ENCODE measurements at regions of chr1 and their contacts with region 1.

Region 1: DNA sequence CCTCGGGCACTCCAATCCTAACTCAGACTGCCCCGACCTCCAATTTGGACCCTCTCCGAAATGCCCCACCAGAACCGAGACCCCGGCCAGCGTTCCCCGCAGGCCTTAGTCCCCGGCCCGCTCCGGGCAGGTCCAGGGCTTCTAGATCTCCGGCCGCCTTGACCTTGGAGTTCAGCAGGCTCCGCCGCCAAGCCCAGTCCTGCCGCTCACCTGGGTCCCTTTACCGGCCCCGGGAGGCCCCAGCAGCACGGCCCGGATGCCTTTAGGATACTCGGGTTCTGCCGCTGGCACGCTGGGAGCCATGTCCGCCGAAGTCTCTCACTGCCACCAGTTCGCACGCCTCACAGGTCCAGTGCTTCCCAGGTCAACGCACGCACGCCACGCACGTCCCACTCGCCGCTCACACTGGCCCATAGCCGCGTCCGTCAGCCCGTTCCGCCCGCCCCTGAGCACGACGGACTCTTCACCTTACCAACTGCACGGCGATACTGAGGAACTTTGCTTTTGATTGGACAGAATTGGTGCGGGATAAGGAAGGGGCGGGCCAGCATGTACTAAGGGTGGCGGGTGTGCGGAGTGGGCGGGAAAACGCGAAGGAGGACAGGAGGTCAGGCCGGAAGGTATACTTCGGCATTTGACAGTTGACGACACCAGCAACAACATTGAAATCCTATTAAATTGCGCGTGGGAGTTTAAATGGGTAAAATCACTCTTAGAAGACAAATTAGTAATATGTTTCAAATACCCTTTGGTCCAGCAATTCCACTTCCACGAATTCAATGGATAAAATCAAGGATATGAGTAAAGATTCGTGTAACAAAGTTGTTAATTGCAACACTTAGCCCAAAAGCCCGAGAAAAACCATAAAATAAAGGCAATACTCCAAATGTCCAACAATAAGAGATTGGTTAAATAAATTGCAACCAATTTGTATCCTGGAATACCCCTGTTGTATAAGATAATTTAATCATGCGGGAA is at the start of gene AK2:
- DNase-seq: peak; percentile 97
- ATAC-seq: peak; percentile 100
- H3K4me3 ChIP-seq: peak within 1 kb of the TSS; percentile 77 to 86 (median 85)
- H3K27ac ChIP-seq: peak within 1 kb of the TSS; percentile 76
- H3K4me1 ChIP-seq: peaks cover 75% of the 10 kb centered on the region
- H3K27me3 ChIP-seq: no peaks in the 10 kb centered on the region
- CTCF ChIP-seq: no peak
- EP300 ChIP-seq: no peak
- POLR2A ChIP-seq: peak; percentile 63 to 80; a peak in 3 of 4 replicates
- RAD21 ChIP-seq: no peak
- total RNA-seq, gene AK2: 188 and 241 TPM in 2 replicates

Region 2: DNA sequence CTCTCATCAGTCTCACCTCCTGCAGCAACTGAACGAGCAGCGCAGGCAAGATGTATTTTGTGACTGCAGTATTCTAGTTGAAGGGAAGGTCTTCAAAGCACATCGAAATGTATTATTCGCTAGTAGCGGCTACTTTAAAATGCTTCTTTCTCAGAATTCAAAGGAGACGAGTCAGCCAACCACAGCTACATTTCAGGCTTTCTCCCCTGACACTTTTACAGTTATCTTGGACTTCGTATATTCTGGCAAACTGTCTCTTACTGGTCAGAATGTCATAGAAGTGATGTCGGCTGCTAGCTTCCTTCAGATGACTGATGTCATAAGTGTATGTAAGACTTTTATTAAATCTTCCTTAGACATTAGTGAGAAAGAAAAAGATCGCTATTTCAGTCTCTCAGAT is 443.9 kb before region 1 on chr1:
- CTCF ChIA-PET with region 1: no interaction called
- POLR2A ChIA-PET with region 1: no interaction called
- in situ Hi-C with region 1: no loop called
- intact Hi-C with region 1: no loop called
- DNase-seq: no peak
- ATAC-seq: no peak
- H3K4me3 ChIP-seq: no peak overlapping the region
- H3K27ac ChIP-seq: no peak overlapping the region
- H3K4me1 ChIP-seq: no peaks in the 10 kb centered on the region
- H3K27me3 ChIP-seq: no peaks in the 10 kb centered on the region
- CTCF ChIP-seq: no peak
- EP300 ChIP-seq: no peak
- POLR2A ChIP-seq: no peak
- RAD21 ChIP-seq: no peak

Region 3: DNA sequence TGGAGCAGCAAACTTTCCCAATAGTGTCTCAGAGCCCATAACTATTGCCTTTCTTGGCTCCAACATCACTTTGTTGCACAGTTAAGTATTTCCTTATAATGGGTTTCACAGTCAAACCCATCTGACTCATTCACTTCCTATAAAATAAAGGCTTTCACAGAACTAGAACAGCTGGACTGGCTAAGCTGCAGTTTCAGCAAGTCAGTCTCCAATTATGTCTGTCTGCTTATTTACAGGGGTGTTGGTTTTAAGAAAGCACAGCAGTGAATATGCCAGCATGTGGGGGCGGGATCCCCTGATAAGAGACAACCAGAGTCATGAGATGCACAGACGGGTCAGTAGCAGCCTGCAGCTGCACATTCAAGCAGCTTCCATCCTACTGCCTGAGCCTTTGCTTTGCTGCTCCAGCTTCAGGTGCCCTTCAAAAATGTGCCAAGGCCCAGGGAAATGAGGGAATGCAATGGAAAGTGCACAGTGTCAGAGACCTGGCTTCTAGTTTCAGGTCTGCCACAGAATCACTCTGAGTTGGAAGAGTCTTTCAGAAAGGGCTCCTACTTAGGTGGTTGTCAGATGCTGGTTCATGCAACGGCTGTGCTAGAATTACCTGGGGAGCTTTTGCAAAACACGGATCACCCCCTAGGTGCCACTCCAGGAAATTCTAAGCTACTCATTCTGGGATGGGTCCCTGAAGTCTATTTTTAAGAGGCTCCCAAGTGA is 97.0 kb before region 1 on chr1:
- CTCF ChIA-PET with region 1: no interaction called
- POLR2A ChIA-PET with region 1: no interaction called
- in situ Hi-C with region 1: no loop called
- intact Hi-C with region 1: no loop called
- DNase-seq: no peak
- ATAC-seq: no peak
- H3K4me3 ChIP-seq: no peak overlapping the region
- H3K27ac ChIP-seq: no peak overlapping the region
- H3K4me1 ChIP-seq: peaks cover 30% of the 10 kb centered on the region
- H3K27me3 ChIP-seq: no peaks in the 10 kb centered on the region
- CTCF ChIP-seq: no peak
- EP300 ChIP-seq: no peak
- POLR2A ChIP-seq: no peak
- RAD21 ChIP-seq: no peak

Region 4: GRCh38 chr1:33007190-33008050 is 29.4 kb before region 1 on chr1:
- CTCF ChIA-PET with region 1: no interaction called
- POLR2A ChIA-PET with region 1: no interaction called
- in situ Hi-C with region 1: no loop called
- intact Hi-C with region 1: no loop called
- DNase-seq: peak; percentile 61
- ATAC-seq: peak; percentile 83
- H3K4me3 ChIP-seq: no peak overlapping the region
- H3K27ac ChIP-seq: no peak overlapping the region
- H3K4me1 ChIP-seq: peaks cover 15% of the 10 kb centered on the region; the same call in 1 of the 2 replicates
- H3K27me3 ChIP-seq: no peaks in the 10 kb centered on the region
- CTCF ChIP-seq: peak; percentile 41; the same call in 1 of the 2 replicates
- EP300 ChIP-seq: no peak
- POLR2A ChIP-seq: no peak
- RAD21 ChIP-seq: no peak

Region 5: GRCh38 chr1:33055210-33056008 is 18.6 kb after region 1 on chr1:
- CTCF ChIA-PET with region 1: no interaction called
- POLR2A ChIA-PET with region 1: no interaction called
- in situ Hi-C with region 1: no loop called
- intact Hi-C with region 1: loop called (anchors 2 kb)
- DNase-seq: peak; percentile 88
- ATAC-seq: peak; percentile 87
- H3K4me3 ChIP-seq: peak overlapping the region in 1 of 3 experiments; percentile 51; a peak in 1 of 6 replicates
- H3K27ac ChIP-seq: no peak overlapping the region
- H3K4me1 ChIP-seq: peaks cover 43% of the 10 kb centered on the region
- H3K27me3 ChIP-seq: no peaks in the 10 kb centered on the region
- CTCF ChIP-seq: peak; percentile 83
- EP300 ChIP-seq: no peak
- POLR2A ChIP-seq: no peak
- RAD21 ChIP-seq: peak; percentile 78

Measured in HepG2 (cell line).